Natural killer cell (primary cell): ENCODE measurements at regions of chr6 and their contacts with region 1.

Region 1: DNA sequence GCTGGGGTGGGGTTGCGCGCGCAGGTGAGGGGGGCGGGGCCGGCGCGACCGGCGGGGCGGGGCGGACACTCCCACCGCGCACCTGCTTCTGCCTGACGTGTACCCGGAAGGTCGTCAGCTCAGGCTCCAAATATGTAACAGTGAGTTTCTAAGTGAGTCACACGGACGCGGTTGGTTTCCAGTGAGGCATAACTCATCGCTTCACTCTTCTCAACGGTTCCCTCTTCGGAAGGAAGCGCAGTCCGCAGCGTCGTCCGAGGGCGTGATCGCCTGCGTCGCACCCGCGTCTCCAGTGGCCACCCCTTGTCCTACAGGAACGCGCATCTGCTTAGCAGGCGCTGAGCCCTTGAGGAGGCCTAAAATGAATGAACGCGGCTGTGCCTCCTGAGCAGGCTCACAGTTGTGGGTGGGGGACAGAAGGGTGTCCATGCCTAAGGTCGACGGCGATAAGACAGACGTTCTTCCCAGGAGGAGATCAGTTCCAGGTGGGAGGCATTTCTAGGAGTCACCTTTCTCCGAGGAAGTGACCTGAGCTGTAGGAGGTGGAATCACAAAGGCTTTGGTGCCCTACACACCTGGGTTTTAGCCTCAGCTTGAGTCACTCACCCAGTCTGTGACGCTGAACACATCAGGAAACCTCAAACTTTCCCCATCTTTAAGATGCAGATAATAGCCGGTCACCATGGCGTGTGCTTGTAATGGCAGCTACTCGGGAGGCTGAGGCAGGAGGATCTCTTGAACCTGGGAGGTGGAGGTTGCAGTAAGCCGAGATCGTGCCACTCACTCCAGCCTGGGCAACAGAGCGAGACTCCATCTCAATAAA is 50.9 kb upstream of the EZR start:
- DNase-seq: peak; percentile 83 to 98
- ATAC-seq: peak; percentile 73 to 91 (median 80)
- H3K4me3 ChIP-seq: peak overlapping the region; percentile 47
- H3K4me3 Mint-ChIP-seq: peak overlapping the region; percentile 92
- H3K27ac ChIP-seq: peak overlapping the region; percentile 90
- H3K27ac Mint-ChIP-seq: peak overlapping the region; percentile 98 to 100
- H3K4me1 ChIP-seq: peaks cover 30% of the 10 kb centered on the region
- H3K4me1 Mint-ChIP-seq: peaks cover 34 to 39% of the 10 kb centered on the region in 2 donors
- H3K27me3 ChIP-seq: no peaks in the 10 kb centered on the region
- H3K27me3 Mint-ChIP-seq: peaks cover 2 to 7% of the 10 kb centered on the region in 2 donors
- CTCF ChIP-seq: no peak

Region 2: GRCh38 chr6:158835616-158836221 is 34.3 kb before region 1 on chr6:
- intact Hi-C with region 1: no loop called
- DNase-seq: no peak
- ATAC-seq: peak; percentile 62 to 75 (median 67)
- H3K4me3 ChIP-seq: no peak overlapping the region
- H3K4me3 Mint-ChIP-seq: no peak overlapping the region
- H3K27ac ChIP-seq: no peak overlapping the region
- H3K27ac Mint-ChIP-seq: peak overlapping the region in 1 of 2 donors; percentile 52
- H3K4me1 ChIP-seq: no peaks in the 10 kb centered on the region
- H3K4me1 Mint-ChIP-seq: peaks cover 5 to 12% of the 10 kb centered on the region in 2 donors
- H3K27me3 ChIP-seq: no peaks in the 10 kb centered on the region
- H3K27me3 Mint-ChIP-seq: peaks cover 6 to 10% of the 10 kb centered on the region in 2 donors
- CTCF ChIP-seq: no peak

Region 3: DNA sequence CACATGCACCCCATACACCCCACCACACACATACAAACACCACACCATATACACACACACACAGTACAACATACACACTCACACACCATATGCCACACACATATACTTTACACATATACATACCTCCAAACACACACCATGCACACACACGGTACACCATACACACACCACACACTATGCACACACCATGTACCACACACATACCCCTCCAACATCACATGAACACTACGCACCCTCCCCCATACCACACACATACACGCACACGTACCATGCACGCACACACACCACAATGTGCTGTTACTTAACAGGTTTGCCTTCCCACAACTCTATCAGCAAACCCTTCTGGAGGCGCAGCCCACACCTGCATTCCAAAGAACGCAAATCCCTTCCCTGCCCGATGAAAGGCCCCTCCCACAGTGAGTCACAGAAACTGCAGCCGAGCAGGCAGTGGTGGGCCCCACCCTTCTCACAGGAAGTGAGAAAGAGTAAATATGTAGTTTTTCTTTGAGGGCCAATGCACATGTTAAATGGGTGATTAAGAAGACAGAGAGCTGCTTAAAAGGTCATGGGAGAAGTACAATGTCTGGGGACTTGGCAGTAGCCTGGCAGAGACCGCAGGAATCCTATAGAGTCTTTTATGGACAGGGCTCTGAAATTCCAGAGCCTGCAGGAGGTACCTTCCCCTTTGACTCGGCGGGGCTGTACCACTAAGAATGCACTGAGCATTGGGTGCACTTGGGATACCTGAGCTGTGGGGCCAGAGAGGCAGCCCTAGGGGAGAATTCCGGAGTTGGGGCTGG is 16.8 kb before region 1 on chr6:
- intact Hi-C with region 1: loop called (anchors 1 kb)
- DNase-seq: peak; percentile 77 to 93
- ATAC-seq: peak; percentile 65 to 86 (median 73)
- H3K4me3 ChIP-seq: peak overlapping the region; percentile 22
- H3K4me3 Mint-ChIP-seq: no peak overlapping the region
- H3K27ac ChIP-seq: peak overlapping the region; percentile 91
- H3K27ac Mint-ChIP-seq: no peak overlapping the region
- H3K4me1 ChIP-seq: peaks cover 64% of the 10 kb centered on the region
- H3K4me1 Mint-ChIP-seq: peaks cover 25 to 27% of the 10 kb centered on the region in 2 donors
- H3K27me3 ChIP-seq: no peaks in the 10 kb centered on the region
- H3K27me3 Mint-ChIP-seq: no peaks in the 10 kb centered on the region
- CTCF ChIP-seq: no peak

Region 4: DNA sequence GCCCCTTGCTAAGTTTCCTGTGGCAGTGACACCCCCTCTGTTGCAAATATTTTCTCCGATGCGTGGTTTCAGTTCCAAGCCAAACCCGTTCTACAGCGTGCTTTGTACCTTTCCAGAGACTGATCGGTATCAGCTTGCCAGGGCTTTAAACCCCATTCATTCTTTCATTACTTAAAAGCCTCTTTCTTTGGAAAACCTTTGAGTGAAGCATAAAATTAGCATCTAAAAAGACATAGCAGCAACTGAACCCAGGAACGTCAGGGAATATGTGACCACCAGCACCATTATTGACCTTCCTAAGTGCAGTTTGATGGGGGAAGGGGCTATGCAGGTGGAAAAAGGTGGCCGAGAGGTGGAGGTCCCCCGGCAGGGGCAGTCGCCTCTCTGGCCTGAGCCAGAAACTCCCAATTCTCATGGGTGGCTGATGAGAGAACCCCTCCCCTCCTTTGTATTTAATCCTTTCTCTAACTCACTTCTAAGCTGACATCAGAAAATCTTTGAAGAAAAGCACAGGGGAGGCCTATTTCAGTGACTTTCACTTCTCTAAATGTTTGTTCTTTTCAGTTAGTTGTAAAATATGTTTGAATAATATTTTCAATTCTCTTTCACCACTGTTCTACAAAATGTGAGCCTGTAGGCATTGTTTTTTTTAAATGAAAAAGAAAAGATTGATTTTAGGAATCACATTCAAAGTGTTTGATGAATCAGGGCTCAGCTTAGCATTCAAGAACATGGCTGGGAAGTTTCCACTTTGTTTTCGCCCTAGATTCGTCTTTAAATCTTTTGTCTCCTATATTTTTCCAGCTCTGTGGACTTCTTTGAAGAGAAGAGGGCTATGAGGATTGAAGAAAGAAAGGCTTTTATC is 40.7 kb after region 1 on chr6:
- intact Hi-C with region 1: loop called (anchors 5 kb)
- DNase-seq: peak in 1 of 2 donors; percentile 48
- ATAC-seq: peak; percentile 45 to 60 (median 49)
- H3K4me3 ChIP-seq: peak overlapping the region; percentile 0
- H3K4me3 Mint-ChIP-seq: peak overlapping the region; percentile 76
- H3K27ac ChIP-seq: peak overlapping the region; percentile 81
- H3K27ac Mint-ChIP-seq: peak overlapping the region; percentile 58 to 86
- H3K4me1 ChIP-seq: peaks cover 43% of the 10 kb centered on the region
- H3K4me1 Mint-ChIP-seq: peaks cover 32 to 49% of the 10 kb centered on the region in 2 donors
- H3K27me3 ChIP-seq: no peaks in the 10 kb centered on the region
- H3K27me3 Mint-ChIP-seq: peaks cover 0 to 3% of the 10 kb centered on the region in 2 donors
- CTCF ChIP-seq: no peak

Region 5: DNA sequence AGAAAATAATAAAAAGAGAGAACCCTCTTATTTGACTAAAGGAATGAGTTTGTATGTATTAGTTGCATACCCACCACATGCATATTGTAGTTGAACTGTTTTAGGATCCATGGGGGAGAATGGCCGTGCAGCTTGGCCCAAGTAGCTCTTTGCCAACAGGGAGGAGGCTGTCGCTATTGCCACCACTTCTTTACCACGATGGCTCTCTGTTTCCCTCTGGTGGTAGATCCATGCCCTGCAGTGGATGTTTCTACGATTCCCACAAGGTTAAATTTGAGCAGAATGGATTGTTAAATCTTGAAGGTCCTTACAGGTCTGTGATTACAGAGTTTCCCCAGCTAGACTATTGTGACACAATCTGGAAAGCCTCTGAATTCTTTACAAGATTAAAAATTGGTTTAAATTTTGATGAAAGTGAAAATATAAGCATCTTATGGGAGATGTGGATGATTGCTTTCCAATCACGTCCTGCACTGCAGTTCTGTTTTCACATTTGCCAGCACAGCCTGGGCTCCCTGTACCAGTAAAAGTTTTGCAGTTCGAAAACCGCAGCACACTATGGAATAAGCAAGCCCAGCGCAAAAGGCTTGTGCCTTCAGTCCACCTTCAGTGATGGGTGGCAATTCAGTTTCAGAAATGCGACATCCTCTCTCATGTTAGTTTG is 264.8 kb after region 1 on chr6:
- intact Hi-C with region 1: no loop called
- DNase-seq: peak; percentile 68 to 90
- ATAC-seq: peak; percentile 89 to 100 (median 98)
- H3K4me3 ChIP-seq: no peak overlapping the region
- H3K4me3 Mint-ChIP-seq: no peak overlapping the region
- H3K27ac ChIP-seq: no peak overlapping the region
- H3K27ac Mint-ChIP-seq: no peak overlapping the region
- H3K4me1 ChIP-seq: peaks cover 4% of the 10 kb centered on the region
- H3K4me1 Mint-ChIP-seq: peaks cover 6 to 12% of the 10 kb centered on the region in 2 donors
- H3K27me3 ChIP-seq: no peaks in the 10 kb centered on the region
- H3K27me3 Mint-ChIP-seq: peaks cover 7 to 14% of the 10 kb centered on the region in 2 donors
- CTCF ChIP-seq: peak; percentile 99

Region 6: GRCh38 chr6:159505140-159505922 is 635.3 kb after region 1 on chr6:
- intact Hi-C with region 1: no loop called
- DNase-seq: no peak
- ATAC-seq: no peak
- H3K4me3 ChIP-seq: no peak overlapping the region
- H3K4me3 Mint-ChIP-seq: no peak overlapping the region
- H3K27ac ChIP-seq: no peak overlapping the region
- H3K27ac Mint-ChIP-seq: no peak overlapping the region
- H3K4me1 ChIP-seq: no peaks in the 10 kb centered on the region
- H3K4me1 Mint-ChIP-seq: no peaks in the 10 kb centered on the region
- H3K27me3 ChIP-seq: no peaks in the 10 kb centered on the region
- H3K27me3 Mint-ChIP-seq: peaks cover 0 to 2% of the 10 kb centered on the region in 2 donors
- CTCF ChIP-seq: no peak